Activated T-helper 1 cell treated with anti-CD3 and anti-CD28 coated beads, Interleukin-12 subunit alpha, Interleukin-12 subunit beta, Interleukin-2, Interleukin-4 antibody, amounts not matched to agents 30 ng/mL and 10 ng/mL and 1 ng/mL, durations not matched to agents 14 hours and 24 hours and 36 hours (primary cell): ENCODE measurements at regions of chr7 and their contacts with region 1.

Region 1: DNA sequence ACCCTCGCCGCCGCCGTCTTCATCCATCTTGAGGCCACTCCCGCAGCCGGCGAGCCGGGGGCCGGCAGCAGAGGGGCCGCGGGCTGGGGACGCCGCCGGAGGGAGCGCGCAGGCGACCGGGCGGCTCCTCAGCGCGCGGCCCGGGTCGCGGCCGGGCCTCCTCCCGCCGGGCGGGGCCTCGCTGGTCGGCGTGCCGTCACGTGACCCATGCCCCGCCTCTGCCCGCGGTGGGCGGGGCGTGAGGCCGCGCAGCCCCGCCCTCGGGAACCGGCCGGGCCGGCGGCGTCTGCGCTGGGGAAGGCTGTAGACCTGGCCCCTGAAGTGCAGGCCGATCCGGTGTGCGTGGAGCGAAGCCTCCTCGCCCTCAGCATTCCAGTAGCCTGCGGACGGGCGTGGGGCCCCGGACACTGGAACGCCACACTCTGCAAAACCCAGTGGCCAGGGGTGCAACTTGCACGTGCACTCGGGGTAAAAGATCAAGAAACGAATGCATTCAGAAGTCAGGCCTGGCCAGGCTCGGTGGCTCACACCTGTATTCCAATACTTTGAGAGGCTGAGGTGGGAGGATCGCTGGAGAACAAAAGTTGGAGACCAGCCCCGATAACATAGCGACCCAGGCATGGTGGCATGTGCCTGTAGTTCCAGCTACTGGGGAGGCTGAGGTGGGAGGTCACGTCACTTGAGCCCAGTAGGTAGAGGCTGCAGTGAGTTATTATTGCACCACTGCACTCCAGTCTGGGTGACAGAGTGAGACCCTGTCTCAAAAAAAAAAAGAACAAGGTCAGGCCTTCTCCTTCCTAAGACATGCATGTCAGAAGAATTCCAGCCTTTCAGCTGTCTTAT is at the start of gene CYTH3:
- DNase-seq: peak; percentile 79
- H3K4me3 Mint-ChIP-seq: peak within 1 kb of the TSS; percentile 79
- H3K27ac Mint-ChIP-seq: no peak within 1 kb of the TSS
- H3K4me1 Mint-ChIP-seq: peaks cover 19% of the 10 kb centered on the region
- H3K27me3 Mint-ChIP-seq: peaks cover 61% of the 10 kb centered on the region
- total RNA-seq, gene CYTH3: 0.65 and 1.7 TPM in 2 replicates

Region 2: GRCh38 chr7:5557920-5558401 is 714.7 kb before region 1 on chr7:
- intact Hi-C with region 1: loop called (anchors 2 kb)
- DNase-seq: no peak
- H3K4me3 Mint-ChIP-seq: peak overlapping the region; percentile 79
- H3K27ac Mint-ChIP-seq: peak overlapping the region; percentile 70
- H3K4me1 Mint-ChIP-seq: peaks cover 35% of the 10 kb centered on the region
- H3K27me3 Mint-ChIP-seq: peaks cover 9% of the 10 kb centered on the region

Region 3: DNA sequence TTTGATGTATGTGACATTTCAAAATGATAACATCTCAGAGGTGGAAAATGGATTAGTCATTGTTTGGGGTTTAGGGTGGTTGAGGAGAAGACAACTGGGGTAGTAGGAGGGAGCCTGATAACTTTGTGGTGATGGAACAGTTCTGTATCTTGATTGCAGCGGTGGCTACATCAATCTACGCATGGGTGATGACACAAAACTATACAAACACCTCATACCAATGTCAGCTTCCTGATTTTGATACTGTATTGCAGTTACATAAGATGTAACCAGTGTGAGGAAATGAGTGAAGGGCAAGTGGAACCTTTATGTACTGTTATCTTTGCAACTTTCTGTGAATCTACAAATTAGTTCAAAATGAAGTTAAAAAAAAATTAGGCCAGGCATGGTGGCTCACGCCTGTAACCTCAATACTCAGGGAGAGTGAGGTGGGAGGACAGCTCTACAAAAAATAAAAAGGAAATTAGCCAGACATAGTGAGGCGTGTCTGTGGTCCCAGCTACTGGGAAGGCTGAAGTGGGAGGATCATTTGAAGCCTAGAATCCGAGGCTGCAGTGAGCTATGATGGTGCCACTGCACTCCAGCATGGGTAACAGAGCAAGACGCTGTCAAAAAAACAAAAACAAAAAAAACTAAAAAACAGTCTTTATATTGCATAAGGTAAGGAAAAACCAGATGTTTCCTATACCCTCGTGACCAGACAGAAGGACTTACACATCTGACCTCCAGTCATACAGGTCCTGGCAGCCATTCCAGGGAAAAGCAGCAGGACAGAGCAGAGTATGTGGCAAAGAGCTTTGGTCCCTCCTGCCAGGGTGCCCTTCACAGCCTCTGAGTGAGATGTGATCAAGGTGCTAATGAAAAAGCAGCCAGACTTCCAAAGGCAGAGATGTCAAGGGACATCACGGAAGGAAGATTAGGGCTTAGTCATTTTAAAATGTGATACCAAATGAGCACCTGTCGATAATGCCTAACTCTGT is 51.1 kb before region 1 on chr7:
- intact Hi-C with region 1: loop called (anchors 5 kb)
- DNase-seq: peak; percentile 6
- H3K4me3 Mint-ChIP-seq: peak overlapping the region; percentile 6
- H3K27ac Mint-ChIP-seq: peak overlapping the region; percentile 72
- H3K4me1 Mint-ChIP-seq: peaks cover 14% of the 10 kb centered on the region
- H3K27me3 Mint-ChIP-seq: peaks cover 41% of the 10 kb centered on the region

Region 4: DNA sequence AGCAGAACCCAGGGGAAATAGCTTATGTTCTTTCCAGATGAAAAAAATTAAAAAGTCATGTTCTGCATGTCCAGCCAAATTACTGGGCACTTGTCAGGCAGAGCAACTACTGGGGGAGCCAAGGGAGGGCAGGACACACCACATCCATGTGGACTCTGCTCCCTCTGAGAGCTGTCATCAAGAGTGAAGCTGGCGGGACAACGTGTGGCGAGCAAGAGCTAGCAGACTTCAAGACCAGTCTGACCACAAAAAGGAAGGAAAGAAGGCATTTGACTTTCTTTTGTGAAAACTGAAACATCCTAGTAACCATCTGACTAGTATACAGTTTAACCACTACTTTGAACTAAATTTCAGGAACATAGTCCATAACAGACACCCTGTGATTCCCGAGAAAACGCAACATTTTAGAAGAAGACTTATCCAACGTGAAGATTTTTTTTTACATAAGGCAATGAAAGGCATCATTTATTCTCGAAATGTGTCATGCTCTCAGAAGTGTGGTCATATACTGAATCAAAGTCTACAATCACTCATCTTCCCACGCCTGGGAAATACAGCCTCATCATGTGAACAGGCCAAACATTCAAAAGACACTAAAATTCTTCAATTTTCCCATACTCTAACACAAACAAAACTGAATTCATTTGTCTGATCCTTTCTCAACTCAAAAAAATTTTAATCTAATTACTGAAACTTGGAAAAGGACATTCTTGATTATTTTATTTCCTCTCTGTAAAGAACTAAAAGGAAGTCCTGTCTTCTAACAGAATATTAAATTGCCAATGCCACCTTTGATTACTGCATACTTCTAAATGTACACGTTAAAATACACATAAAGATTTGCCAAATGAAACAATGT is 15.8 kb before region 1 on chr7:
- intact Hi-C with region 1: loop called (anchors 1 kb)
- DNase-seq: no peak
- H3K4me3 Mint-ChIP-seq: no peak overlapping the region
- H3K27ac Mint-ChIP-seq: no peak overlapping the region
- H3K4me1 Mint-ChIP-seq: peaks cover 22% of the 10 kb centered on the region
- H3K27me3 Mint-ChIP-seq: peaks cover 56% of the 10 kb centered on the region

Region 5: GRCh38 chr7:6435486-6436384 is 163.0 kb after region 1 on chr7:
- intact Hi-C with region 1: loop called (anchors 5 kb)
- DNase-seq: peak; percentile 80
- H3K4me3 Mint-ChIP-seq: peak overlapping the region; percentile 71
- H3K27ac Mint-ChIP-seq: peak overlapping the region; percentile 83
- H3K4me1 Mint-ChIP-seq: peaks cover 36% of the 10 kb centered on the region
- H3K27me3 Mint-ChIP-seq: no peaks in the 10 kb centered on the region